PC-9 (cell line): ENCODE measurements at regions of chr1 and their contacts with region 1.

Region 1: GRCh38 chr1:43836267-43836951 is 97.2 kb upstream of the ARTN start:
- DNase-seq: peak; percentile 68 to 95
- H3K4me3 ChIP-seq: no peak overlapping the region
- H3K27ac ChIP-seq: peak overlapping the region; percentile 94
- H3K4me1 ChIP-seq: peaks cover 62% of the 10 kb centered on the region
- H3K27me3 ChIP-seq: no peaks in the 10 kb centered on the region
- CTCF ChIP-seq: no peak

Region 2: DNA sequence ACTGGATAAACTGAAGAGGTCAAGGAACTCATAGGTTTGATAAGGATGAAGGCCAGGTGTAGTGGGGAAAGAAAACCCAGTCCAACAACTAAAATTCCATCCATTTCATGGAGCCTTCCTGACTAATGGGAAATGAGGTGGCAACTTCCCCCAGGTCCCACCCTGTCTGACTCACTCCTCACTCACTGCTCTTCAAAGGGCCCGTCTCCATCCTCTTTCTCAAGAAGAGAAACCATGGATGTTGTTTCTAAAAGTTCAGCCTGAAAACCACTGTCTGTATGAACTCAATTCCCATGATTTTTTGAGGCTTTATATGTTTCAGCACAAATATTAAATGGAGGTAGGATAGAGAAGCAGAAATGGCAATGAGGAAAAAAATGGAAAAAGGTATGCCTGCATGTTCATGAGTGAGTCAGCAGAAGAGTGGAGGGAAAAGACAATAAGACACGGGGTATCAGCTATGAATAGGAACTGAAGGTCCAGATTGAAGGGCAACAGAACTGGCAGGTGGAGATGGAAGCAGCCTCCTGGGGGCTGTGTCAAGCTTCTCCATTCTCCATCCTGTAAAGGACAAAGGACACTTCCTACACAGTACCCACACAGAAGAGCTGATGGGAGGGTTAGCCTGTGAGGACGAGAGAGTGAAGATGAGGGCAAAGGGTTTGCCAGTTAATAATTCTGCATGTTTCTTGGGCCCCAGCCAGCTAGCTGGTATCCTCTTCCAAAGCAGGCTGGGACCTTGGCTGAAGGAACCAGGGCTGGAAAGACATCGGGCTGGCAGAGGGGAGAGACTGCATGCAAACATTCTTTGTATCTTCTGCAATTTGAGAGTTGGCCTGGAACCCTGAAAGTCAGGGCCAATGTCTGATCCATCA is 463.1 kb before region 1 on chr1:
- CTCF ChIA-PET with region 1: no interaction called
- POLR2A ChIA-PET with region 1: no interaction called
- intact Hi-C with region 1: loop called (anchors 5 kb)
- DNase-seq: peak; percentile 68 to 88
- H3K4me3 ChIP-seq: no peak overlapping the region
- H3K27ac ChIP-seq: peak overlapping the region; percentile 85
- H3K4me1 ChIP-seq: peaks cover 52% of the 10 kb centered on the region
- H3K27me3 ChIP-seq: no peaks in the 10 kb centered on the region
- CTCF ChIP-seq: no peak

Region 3: GRCh38 chr1:43554444-43554992 is 281.9 kb before region 1 on chr1:
- CTCF ChIA-PET with region 1: no interaction called
- POLR2A ChIA-PET with region 1: no interaction called
- intact Hi-C with region 1: loop called (anchors 10 kb)
- DNase-seq: peak in 1 of 2 experiments; percentile 40
- H3K4me3 ChIP-seq: no peak overlapping the region
- H3K27ac ChIP-seq: 0 out of 2 replicates have a peak overlapping the region, but pooled peaks have one; percentile 13
- H3K4me1 ChIP-seq: peaks cover 79% of the 10 kb centered on the region
- H3K27me3 ChIP-seq: no peaks in the 10 kb centered on the region
- CTCF ChIP-seq: peak; percentile 68

Region 4: DNA sequence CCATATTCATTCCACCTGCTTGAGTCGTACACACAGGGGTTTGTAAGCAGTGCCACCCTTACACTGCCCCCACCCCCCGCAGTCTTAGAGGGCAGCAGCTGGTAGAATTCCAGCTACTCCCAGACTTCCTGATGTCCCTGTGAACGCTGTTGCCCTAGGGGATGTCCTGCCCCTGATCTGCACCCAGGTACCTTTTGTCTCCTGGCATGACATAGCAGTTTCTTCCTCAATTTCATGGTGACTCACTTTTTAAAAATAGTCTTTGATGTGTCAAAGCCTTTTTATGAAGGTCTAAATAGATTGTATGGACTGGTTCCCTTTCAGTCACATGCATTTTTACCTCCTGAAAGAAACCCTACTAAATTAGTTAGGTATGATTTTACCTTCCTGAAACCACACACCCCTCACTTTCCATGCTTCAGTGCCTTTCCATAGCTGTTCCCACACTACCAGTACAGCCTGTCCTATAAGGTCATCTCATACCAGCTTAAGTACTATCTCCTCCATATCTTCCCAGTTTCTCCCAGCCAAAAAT is 52.7 kb before region 1 on chr1:
- CTCF ChIA-PET with region 1: no interaction called
- POLR2A ChIA-PET with region 1: interaction called, 4 read pairs
- intact Hi-C with region 1: loop called (anchors 1 kb)
- DNase-seq: peak; percentile 93 to 98
- H3K4me3 ChIP-seq: no peak overlapping the region; the same call in 1 of the 2 replicates
- H3K27ac ChIP-seq: peak overlapping the region; percentile 99
- H3K4me1 ChIP-seq: peaks cover 48% of the 10 kb centered on the region
- H3K27me3 ChIP-seq: no peaks in the 10 kb centered on the region
- CTCF ChIP-seq: no peak

Region 5: DNA sequence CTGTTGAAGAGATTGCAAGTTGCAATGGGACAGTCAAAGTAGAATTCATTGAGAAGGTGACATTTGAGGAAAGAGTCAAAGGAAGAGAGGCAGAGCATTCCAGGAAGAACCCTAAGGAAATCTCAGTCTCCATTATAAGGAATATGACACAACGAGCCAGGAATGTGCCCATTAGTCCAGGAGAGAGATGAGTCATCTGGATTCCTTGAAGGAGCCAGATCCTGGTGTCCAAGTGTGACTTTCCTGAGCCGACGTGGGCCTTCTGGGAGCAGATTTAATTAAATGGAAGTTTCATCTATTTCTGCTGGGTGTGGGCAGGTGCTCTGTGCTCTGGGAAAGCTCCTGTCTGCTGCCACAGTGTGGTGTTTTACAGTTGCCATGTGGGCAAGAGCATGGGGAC is 14.4 kb before region 1 on chr1:
- CTCF ChIA-PET with region 1: no interaction called
- POLR2A ChIA-PET with region 1: no interaction called
- intact Hi-C with region 1: loop called (anchors 1 kb)
- DNase-seq: peak; percentile 65 to 90
- H3K4me3 ChIP-seq: no peak overlapping the region
- H3K27ac ChIP-seq: peak overlapping the region; percentile 87
- H3K4me1 ChIP-seq: peaks cover 41% of the 10 kb centered on the region
- H3K27me3 ChIP-seq: no peaks in the 10 kb centered on the region
- CTCF ChIP-seq: no peak

Region 6: DNA sequence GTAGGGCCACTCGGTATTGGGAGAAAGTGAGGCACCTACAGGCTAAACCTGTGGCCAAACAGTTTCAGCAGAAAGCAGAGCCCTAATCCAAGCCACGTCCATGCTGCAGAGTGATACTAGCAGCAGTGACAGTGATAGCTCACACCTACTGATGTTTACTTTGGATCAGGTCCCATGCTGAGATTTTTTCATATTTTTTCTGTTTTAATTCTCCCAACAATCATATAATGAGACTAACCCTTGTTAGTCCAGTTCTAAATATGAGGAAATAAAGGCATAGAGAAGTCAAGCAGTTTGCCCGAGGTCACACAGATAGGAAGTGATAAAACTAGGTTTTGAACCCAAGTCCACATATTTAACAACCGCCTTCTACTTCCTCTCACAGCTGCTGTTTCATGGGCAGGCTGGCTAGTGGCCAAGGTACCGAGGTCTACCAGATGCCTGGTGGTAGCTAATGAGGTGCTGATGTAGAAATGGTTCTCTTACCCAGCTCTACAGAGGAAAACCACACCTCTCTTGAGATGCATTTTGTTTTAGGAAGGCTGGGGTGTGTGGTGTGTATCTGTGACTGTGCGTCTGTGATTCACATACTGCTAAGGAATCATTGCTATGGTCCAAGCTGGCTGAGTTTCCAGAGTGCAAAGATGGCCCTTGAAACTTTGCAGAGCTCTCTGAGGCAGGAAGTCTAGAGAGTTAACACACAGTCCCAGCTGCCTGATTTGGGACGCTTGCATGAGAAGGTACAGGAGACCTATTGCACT is 16.9 kb after region 1 on chr1:
- CTCF ChIA-PET with region 1: no interaction called
- POLR2A ChIA-PET with region 1: interaction called, 4 read pairs
- intact Hi-C with region 1: loop called (anchors 1 kb)
- DNase-seq: peak; percentile 79 to 83
- H3K4me3 ChIP-seq: no peak overlapping the region
- H3K27ac ChIP-seq: peak overlapping the region; percentile 54
- H3K4me1 ChIP-seq: peaks cover 31% of the 10 kb centered on the region
- H3K27me3 ChIP-seq: no peaks in the 10 kb centered on the region
- CTCF ChIP-seq: no peak